B cell (primary cell): ENCODE measurements at regions of chr11 and their contacts with region 1.

Region 1: GRCh38 chr11:59171508-59172322 is at the start of gene DTX4:
- DNase-seq: peak; percentile 93
- ATAC-seq: peak; percentile 80
- H3K4me3 ChIP-seq: peak within 1 kb of the TSS; percentile 55 to 76 (median 74)
- H3K4me3 Mint-ChIP-seq: peak within 1 kb of the TSS; percentile 98
- H3K27ac ChIP-seq: peak within 1 kb of the TSS; percentile 38 to 60
- H3K27ac Mint-ChIP-seq: peak within 1 kb of the TSS; percentile 92
- H3K4me1 ChIP-seq: peaks cover 20 to 26% of the 10 kb centered on the region in 2 donors
- H3K4me1 Mint-ChIP-seq: peaks cover 28% of the 10 kb centered on the region
- H3K27me3 ChIP-seq: no peaks in the 10 kb centered on the region
- H3K27me3 Mint-ChIP-seq: no peaks in the 10 kb centered on the region
- CTCF ChIP-seq: peak; percentile 96
- total RNA-seq, gene DTX4: 41.0 and 43.3 TPM in 2 replicates

Region 2: DNA sequence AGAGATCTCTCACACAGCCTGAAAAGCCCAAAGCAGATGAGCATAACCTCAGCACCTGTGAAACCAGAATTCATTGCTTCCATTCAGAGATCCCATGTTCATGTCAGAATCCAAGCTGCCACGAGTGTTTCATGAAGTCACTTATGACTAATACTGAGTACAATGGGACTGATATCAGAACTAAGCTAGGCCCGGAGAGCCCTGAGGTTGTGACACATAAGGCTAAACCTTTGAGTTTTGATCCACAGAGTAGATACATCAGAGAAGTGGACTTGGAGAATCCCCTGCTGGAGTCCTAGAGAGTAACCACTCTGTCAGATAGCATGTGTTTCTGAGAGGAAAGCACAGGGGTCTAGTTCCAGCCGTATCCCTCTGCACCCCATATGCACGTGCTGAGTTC is 233.3 kb before region 1 on chr11:
- CTCF ChIA-PET with region 1: no interaction called
- POLR2A ChIA-PET with region 1: no interaction called
- intact Hi-C with region 1: no loop called
- DNase-seq: no peak
- ATAC-seq: no peak
- H3K4me3 ChIP-seq: no peak overlapping the region
- H3K4me3 Mint-ChIP-seq: no peak overlapping the region
- H3K27ac ChIP-seq: no peak overlapping the region
- H3K27ac Mint-ChIP-seq: no peak overlapping the region
- H3K4me1 ChIP-seq: no peaks in the 10 kb centered on the region
- H3K4me1 Mint-ChIP-seq: no peaks in the 10 kb centered on the region
- H3K27me3 ChIP-seq: no peaks in the 10 kb centered on the region
- H3K27me3 Mint-ChIP-seq: peaks cover 3% of the 10 kb centered on the region
- CTCF ChIP-seq: no peak

Region 3: GRCh38 chr11:59040607-59041006 is 131.1 kb before region 1 on chr11:
- CTCF ChIA-PET with region 1: no interaction called
- POLR2A ChIA-PET with region 1: no interaction called
- intact Hi-C with region 1: no loop called
- DNase-seq: no peak
- ATAC-seq: no peak
- H3K4me3 ChIP-seq: no peak overlapping the region
- H3K4me3 Mint-ChIP-seq: no peak overlapping the region
- H3K27ac ChIP-seq: no peak overlapping the region
- H3K27ac Mint-ChIP-seq: no peak overlapping the region
- H3K4me1 ChIP-seq: peaks cover 0 to 3% of the 10 kb centered on the region in 2 donors
- H3K4me1 Mint-ChIP-seq: peaks cover 18% of the 10 kb centered on the region
- H3K27me3 ChIP-seq: no peaks in the 10 kb centered on the region
- H3K27me3 Mint-ChIP-seq: no peaks in the 10 kb centered on the region
- CTCF ChIP-seq: no peak

Region 4: DNA sequence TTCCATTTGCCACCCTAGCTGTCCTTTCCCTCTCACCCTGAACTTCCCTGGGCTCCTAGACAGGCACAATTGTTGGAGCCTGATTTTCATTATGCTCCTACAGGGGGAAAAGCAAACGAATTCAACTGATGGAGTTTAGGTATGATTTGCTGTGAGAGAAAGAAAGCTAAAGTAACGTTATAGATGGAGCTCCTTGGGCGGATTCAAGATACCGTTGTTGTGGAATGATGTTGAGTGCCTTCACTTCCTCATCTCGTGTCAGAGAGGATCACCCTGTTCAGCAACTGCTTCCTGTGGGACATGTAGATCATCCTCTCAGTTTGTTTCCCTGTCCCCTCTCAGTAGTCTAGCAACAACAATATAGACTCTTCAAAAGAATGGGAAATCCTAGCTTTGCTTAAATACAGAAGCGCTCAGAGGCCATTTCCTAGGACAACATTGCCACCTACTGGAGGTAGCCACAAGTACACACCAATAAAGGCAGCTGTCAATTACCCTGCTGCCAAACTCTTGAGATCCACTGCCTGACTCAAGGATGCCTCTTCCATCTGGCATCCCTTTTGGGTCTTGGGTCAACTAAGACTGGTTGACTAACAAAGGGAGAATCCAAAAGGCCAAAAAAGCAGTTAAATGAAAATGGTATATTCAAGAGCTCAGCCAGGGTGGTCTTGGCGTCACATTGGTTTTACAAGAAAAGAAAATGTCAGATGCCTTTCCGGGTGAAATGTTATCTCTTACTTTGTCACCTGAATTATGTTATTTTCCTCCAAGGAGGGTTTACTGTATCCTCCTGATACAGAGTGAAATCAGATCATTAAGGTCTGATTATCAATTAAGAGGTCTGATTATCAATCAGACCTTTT is 13.3 kb before region 1 on chr11:
- CTCF ChIA-PET with region 1: interaction called, 45 read pairs
- POLR2A ChIA-PET with region 1: no interaction called
- intact Hi-C with region 1: no loop called
- DNase-seq: peak; percentile 86
- ATAC-seq: peak; percentile 97
- H3K4me3 ChIP-seq: no peak overlapping the region
- H3K4me3 Mint-ChIP-seq: peak overlapping the region; percentile 75
- H3K27ac ChIP-seq: no peak overlapping the region
- H3K27ac Mint-ChIP-seq: peak overlapping the region; percentile 73
- H3K4me1 ChIP-seq: peaks cover 11 to 14% of the 10 kb centered on the region in 2 donors
- H3K4me1 Mint-ChIP-seq: peaks cover 19% of the 10 kb centered on the region
- H3K27me3 ChIP-seq: no peaks in the 10 kb centered on the region
- H3K27me3 Mint-ChIP-seq: no peaks in the 10 kb centered on the region
- CTCF ChIP-seq: peak; percentile 94

Region 5: DNA sequence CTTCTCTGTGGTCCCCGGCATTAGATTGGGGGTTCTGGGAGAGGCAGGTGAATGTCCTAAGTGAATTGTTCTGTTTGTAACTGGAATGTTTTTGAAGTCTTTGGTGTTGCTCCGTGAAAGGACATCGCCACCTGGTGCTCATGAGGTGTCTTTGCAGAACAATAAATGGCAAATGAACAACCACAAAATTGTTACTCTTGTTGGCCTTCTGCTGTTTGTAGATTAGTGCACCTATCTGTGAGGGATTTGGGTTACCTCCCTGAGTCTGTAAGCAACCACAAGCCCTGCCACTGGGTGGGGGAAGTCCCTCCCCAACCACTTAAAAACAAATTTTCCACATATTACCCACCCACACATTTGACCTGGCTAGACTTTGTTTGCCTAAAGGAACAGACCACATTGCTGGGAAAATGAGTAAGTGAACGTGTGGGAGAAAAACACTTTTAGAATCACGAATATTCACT is 36.3 kb after region 1 on chr11:
- CTCF ChIA-PET with region 1: interaction called, 87 read pairs
- POLR2A ChIA-PET with region 1: interaction called, 20 read pairs
- intact Hi-C with region 1: loop called (anchors 1 kb)
- DNase-seq: peak; percentile 84
- ATAC-seq: peak; percentile 68
- H3K4me3 ChIP-seq: peak overlapping the region; percentile 49 to 91 (median 73)
- H3K4me3 Mint-ChIP-seq: peak overlapping the region; percentile 95
- H3K27ac ChIP-seq: peak overlapping the region; percentile 64 to 89
- H3K27ac Mint-ChIP-seq: peak overlapping the region; percentile 95
- H3K4me1 ChIP-seq: peaks cover 61 to 68% of the 10 kb centered on the region in 2 donors
- H3K4me1 Mint-ChIP-seq: peaks cover 93% of the 10 kb centered on the region
- H3K27me3 ChIP-seq: no peaks in the 10 kb centered on the region
- H3K27me3 Mint-ChIP-seq: no peaks in the 10 kb centered on the region
- CTCF ChIP-seq: peak; percentile 82

Region 6: GRCh38 chr11:59263225-59263894 is 91.6 kb after region 1 on chr11:
- CTCF ChIA-PET with region 1: interaction called, 86 read pairs
- POLR2A ChIA-PET with region 1: interaction called, 5 read pairs
- intact Hi-C with region 1: no loop called
- DNase-seq: peak; percentile 78
- ATAC-seq: peak; percentile 65
- H3K4me3 ChIP-seq: no peak overlapping the region
- H3K4me3 Mint-ChIP-seq: peak overlapping the region; percentile 50
- H3K27ac ChIP-seq: no peak overlapping the region
- H3K27ac Mint-ChIP-seq: peak overlapping the region; percentile 37
- H3K4me1 ChIP-seq: peaks cover 52 to 69% of the 10 kb centered on the region in 2 donors
- H3K4me1 Mint-ChIP-seq: peaks cover 68% of the 10 kb centered on the region
- H3K27me3 ChIP-seq: no peaks in the 10 kb centered on the region
- H3K27me3 Mint-ChIP-seq: no peaks in the 10 kb centered on the region
- CTCF ChIP-seq: peak; percentile 68

Region 7: DNA sequence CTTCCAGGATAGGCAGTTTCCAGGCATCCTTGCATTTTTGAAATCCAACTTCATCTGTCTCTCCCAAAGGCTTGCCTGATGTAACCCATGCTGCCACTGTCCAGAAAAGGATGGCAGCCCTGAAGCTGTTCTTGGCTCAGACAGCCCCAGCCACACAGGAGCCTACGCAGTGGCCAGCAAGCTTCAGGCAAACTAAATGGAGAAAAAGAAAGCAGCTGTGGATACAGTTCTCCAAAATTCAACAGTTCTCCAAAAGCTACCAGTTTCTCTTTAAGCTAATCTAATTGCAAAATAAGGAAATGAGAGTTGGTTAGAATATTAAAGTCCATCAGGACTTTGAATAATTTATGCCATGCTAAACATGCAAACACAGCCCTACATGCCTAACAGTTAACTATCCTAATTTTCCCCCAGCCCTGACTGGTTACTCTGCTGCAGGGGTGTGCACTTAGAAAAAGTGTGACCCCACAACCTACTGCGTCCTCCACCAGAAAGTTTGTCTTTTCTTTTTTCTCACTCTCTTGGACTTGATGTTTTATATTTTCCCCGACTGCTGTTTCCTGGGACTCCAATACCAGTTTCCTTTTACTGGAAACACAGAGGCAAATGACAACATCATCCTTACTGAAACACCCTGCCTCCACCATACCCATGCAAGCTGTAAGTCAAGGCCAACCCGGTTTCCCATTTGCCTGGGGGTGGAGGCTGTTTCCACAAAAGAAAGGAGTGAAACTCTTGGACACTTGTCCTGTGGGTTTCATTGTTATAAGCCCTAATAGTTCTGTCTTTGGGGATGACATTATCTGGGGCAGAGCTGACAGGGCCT is 117.9 kb after region 1 on chr11:
- CTCF ChIA-PET with region 1: interaction called, 18 read pairs
- POLR2A ChIA-PET with region 1: interaction called, 4 read pairs
- intact Hi-C with region 1: loop called (anchors 1 kb)
- DNase-seq: peak; percentile 52
- ATAC-seq: peak; percentile 18
- H3K4me3 ChIP-seq: no peak overlapping the region
- H3K4me3 Mint-ChIP-seq: peak overlapping the region; percentile 60
- H3K27ac ChIP-seq: no peak overlapping the region
- H3K27ac Mint-ChIP-seq: peak overlapping the region; percentile 71
- H3K4me1 ChIP-seq: peaks cover 22 to 39% of the 10 kb centered on the region in 2 donors
- H3K4me1 Mint-ChIP-seq: peaks cover 43% of the 10 kb centered on the region
- H3K27me3 ChIP-seq: no peaks in the 10 kb centered on the region
- H3K27me3 Mint-ChIP-seq: no peaks in the 10 kb centered on the region
- CTCF ChIP-seq: no peak

Region 8: GRCh38 chr11:59429924-59430516 is 258.3 kb after region 1 on chr11:
- CTCF ChIA-PET with region 1: interaction called, 141 read pairs
- POLR2A ChIA-PET with region 1: interaction called, 6 read pairs
- intact Hi-C with region 1: loop called (anchors 1 kb)
- DNase-seq: peak; percentile 86
- ATAC-seq: peak; percentile 87
- H3K4me3 ChIP-seq: no peak overlapping the region
- H3K4me3 Mint-ChIP-seq: no peak overlapping the region
- H3K27ac ChIP-seq: no peak overlapping the region
- H3K27ac Mint-ChIP-seq: no peak overlapping the region
- H3K4me1 ChIP-seq: no peaks in the 10 kb centered on the region
- H3K4me1 Mint-ChIP-seq: no peaks in the 10 kb centered on the region
- H3K27me3 ChIP-seq: no peaks in the 10 kb centered on the region
- H3K27me3 Mint-ChIP-seq: peaks cover 12% of the 10 kb centered on the region
- CTCF ChIP-seq: peak; percentile 93